ENCODE measurements at regions of chr17 and their contacts with region 1.

Region 1: DNA sequence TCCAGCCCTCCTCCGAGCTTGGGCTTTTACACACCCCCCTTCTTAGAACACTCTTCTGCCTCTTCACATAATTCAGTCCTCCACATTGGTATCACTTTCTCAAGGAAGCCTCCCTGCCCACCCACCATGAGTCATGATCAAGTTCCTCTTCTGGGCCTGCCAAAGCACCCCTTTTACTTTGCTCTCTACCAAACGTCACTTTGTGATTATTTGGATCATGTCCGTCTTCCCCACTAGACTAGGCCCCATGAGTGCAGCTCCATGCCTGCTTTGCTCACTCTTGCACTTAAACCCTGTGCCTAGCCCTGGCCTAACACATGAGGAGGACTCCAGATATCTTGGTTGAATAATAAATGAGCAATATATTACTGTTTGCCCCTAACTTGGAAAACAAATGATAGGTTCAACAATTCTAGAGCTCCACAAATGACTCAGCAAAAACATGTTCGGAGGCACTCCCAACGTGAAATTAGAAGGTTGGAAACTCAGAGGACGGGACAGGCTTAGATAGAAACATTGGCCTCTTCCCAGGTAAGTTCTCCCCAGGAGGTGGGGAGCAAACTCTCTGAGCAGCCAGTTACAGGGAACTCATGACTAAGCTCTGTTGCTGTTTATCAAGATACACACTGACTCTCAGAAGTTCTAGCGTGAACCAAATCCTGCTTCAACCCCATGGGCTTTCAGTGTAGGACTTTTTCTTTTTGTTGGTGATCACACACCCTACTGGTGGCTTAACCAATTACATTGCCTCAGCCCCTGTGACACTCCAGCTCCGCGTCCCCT is 28.3 kb downstream of the G6PC1 start:
- DNase-seq: peak; percentile 18
- H3K4me3 ChIP-seq: no peak overlapping the region
- H3K27ac ChIP-seq: peak overlapping the region; percentile 49 to 74 (median 68)
- H3K4me1 ChIP-seq: peaks cover 0 to 7% (median 5%) of the 10 kb centered on the region in 4 donors
- H3K27me3 ChIP-seq: peaks cover 42% of the 10 kb centered on the region
- CTCF ChIP-seq: peak; percentile 58 to 83 (median 65)
- EP300 ChIP-seq: no peak
- POLR2A ChIP-seq: no peak

Region 2: GRCh38 chr17:42720996-42721583 is 207.8 kb before region 1 on chr17:
- in situ Hi-C with region 1: loop called in 2 of 4 experiments (anchors 25 kb)
- intact Hi-C with region 1: no loop called
- DNase-seq: no peak
- H3K4me3 ChIP-seq: no peak overlapping the region
- H3K27ac ChIP-seq: no peak overlapping the region
- H3K4me1 ChIP-seq: no peaks in the 10 kb centered on the region
- H3K27me3 ChIP-seq: no peaks in the 10 kb centered on the region
- CTCF ChIP-seq: peak; percentile 57 to 71 (median 67)
- EP300 ChIP-seq: no peak
- POLR2A ChIP-seq: no peak

Region 3: GRCh38 chr17:42832974-42833766 is 95.7 kb before region 1 on chr17 and contains the start of gene PSME3:
- in situ Hi-C with region 1: loop called in 1 of 4 experiments (anchors 25 kb)
- intact Hi-C with region 1: no loop called
- DNase-seq: peak; percentile 93
- H3K4me3 ChIP-seq: peak within 1 kb of the TSS; percentile 86 to 94 (median 88)
- H3K27ac ChIP-seq: peak within 1 kb of the TSS; percentile 83 to 91 (median 90)
- H3K4me1 ChIP-seq: peaks cover 0 to 18% (median 15%) of the 10 kb centered on the region in 4 donors
- H3K27me3 ChIP-seq: no peaks in the 10 kb centered on the region
- CTCF ChIP-seq: no peak
- EP300 ChIP-seq: no peak
- POLR2A ChIP-seq: peak; percentile 96
- total RNA-seq, gene PSME3: 37.0 to 131 (median 60.4) TPM

Region 4: DNA sequence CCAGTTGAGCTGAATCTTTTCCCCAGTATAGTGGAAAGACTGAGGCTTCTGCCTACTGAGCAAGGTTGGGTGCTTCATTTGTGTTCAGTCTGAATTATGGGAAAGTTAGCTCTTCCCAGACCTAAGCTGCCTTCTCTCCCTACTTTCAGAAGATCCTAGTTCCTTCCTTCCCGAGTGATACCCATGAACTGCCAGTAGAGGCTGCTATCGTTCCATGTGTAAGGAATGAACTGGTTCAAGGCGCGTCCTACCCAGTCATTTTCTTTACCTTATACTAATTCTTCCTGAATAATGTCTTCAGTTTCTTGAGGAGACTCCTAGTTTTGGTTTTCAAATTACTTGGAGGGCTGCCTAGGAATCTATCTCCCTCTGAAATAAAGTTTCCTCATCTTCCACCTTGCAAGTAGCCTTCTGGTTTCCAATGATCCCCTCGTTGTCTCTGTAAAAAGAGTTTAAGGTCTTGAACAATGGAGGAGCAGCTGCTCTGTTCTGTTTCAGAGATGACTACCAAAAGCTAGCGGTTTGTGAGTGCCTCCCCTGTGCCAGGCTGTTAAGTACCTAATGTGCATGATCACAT is 85.5 kb before region 1 on chr17:
- in situ Hi-C with region 1: loop called in 3 of 4 experiments (anchors 10 to 25 kb)
- intact Hi-C with region 1: no loop called
- DNase-seq: no peak
- H3K4me3 ChIP-seq: no peak overlapping the region
- H3K27ac ChIP-seq: peak overlapping the region in 1 of 4 donors; percentile 46
- H3K4me1 ChIP-seq: peaks cover 0 to 4% (median 1%) of the 10 kb centered on the region in 4 donors
- H3K27me3 ChIP-seq: peaks cover 1% of the 10 kb centered on the region
- CTCF ChIP-seq: peak; percentile 89 to 94 (median 92)
- EP300 ChIP-seq: no peak
- POLR2A ChIP-seq: no peak

Region 5: GRCh38 chr17:42850954-42851353 is 78.0 kb before region 1 on chr17 and contains the start of gene AOC3:
- in situ Hi-C with region 1: loop called (anchors 10 to 25 kb)
- intact Hi-C with region 1: no loop called
- DNase-seq: peak; percentile 38
- H3K4me3 ChIP-seq: peak within 1 kb of the TSS; percentile 18 to 46 (median 27)
- H3K27ac ChIP-seq: peak within 1 kb of the TSS; percentile 76 to 85 (median 79)
- H3K4me1 ChIP-seq: peaks cover 5 to 20% (median 15%) of the 10 kb centered on the region in 4 donors
- H3K27me3 ChIP-seq: peaks cover 23% of the 10 kb centered on the region
- CTCF ChIP-seq: no peak
- EP300 ChIP-seq: no peak
- POLR2A ChIP-seq: no peak
- total RNA-seq, gene AOC3: 14.3 to 134 (median 35.2) TPM

Measured in transverse colon (tissue), 4 donors.